ENCODE measurements at regions of chr3 and their contacts with region 1.

Region 1: GRCh38 chr3:72818092-72818773 is 30.0 kb downstream of the SHQ1 start:
- DNase-seq: no peak
- H3K4me3 ChIP-seq: no peak overlapping the region
- H3K27ac ChIP-seq: no peak overlapping the region
- H3K4me1 ChIP-seq: peaks cover 23 to 37% (median 26%) of the 10 kb centered on the region in 4 donors
- H3K27me3 ChIP-seq: no peaks in the 10 kb centered on the region
- CTCF ChIP-seq: peak; percentile 44 to 56 (median 50)
- EP300 ChIP-seq: no peak
- POLR2A ChIP-seq: no peak

Region 2: DNA sequence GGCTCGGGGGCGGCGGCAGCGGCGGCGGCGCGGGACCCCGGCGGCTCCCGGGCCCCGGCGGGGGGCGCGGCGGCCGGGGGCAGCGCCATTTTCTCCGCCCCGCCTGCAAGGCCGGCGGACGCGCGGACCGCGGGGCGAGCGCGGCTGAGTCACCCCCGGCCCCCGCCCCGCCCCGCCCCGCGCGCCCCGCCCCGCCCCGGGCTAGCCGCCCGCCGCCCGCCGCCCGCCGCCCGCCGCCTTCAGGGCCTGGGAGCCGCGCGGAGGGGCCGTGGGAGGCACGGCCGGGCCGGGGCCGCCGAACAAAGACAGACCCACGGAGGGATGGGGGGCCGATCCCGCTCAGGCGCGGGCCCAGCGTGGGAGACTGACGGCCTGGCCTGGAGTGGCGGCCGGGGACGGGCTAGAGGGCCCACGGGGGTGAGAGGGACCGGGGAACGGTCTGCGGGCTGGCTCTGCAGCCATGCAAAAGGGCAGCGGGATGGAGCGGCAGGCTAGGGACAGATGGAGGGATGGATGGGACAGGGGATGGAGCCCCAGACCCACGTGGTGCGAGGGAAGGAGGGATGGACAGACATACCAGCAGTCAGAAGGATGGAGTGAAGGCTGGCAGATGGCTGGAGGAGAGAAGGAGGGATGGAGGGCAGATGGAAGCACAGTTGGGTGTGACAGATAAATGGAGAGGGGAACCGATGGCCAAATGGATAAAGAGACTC is 1092.8 kb before region 1 on chr3 and contains the start of gene EIF4E3:
- intact Hi-C with region 1: loop called (anchors 10 kb)
- DNase-seq: no peak
- H3K4me3 ChIP-seq: peak within 1 kb of the TSS; percentile 70 to 99 (median 86)
- H3K27ac ChIP-seq: peak within 1 kb of the TSS; percentile 80 to 84 (median 84)
- H3K4me1 ChIP-seq: peaks cover 19 to 41% (median 29%) of the 10 kb centered on the region in 4 donors
- H3K27me3 ChIP-seq: no peaks in the 10 kb centered on the region
- CTCF ChIP-seq: no peak
- EP300 ChIP-seq: no peak
- POLR2A ChIP-seq: no peak
- total RNA-seq, gene EIF4E3: 36.2 to 51.9 (median 39.4) TPM

Region 3: GRCh38 chr3:71955240-71956068 is 862.8 kb before region 1 on chr3:
- intact Hi-C with region 1: loop called (anchors 2 kb)
- DNase-seq: peak; percentile 93
- H3K4me3 ChIP-seq: no peak overlapping the region
- H3K27ac ChIP-seq: no peak overlapping the region
- H3K4me1 ChIP-seq: peaks cover 6 to 12% (median 10%) of the 10 kb centered on the region in 4 donors
- H3K27me3 ChIP-seq: no peaks in the 10 kb centered on the region
- CTCF ChIP-seq: peak; percentile 74 to 79 (median 74)
- EP300 ChIP-seq: no peak
- POLR2A ChIP-seq: no peak

Region 4: GRCh38 chr3:72836923-72837322 is 18.7 kb after region 1 on chr3:
- intact Hi-C with region 1: no loop called
- DNase-seq: no peak
- H3K4me3 ChIP-seq: no peak overlapping the region
- H3K27ac ChIP-seq: peak overlapping the region in 1 of 4 donors; percentile 52
- H3K4me1 ChIP-seq: peaks cover 5 to 19% (median 15%) of the 10 kb centered on the region in 4 donors
- H3K27me3 ChIP-seq: no peaks in the 10 kb centered on the region
- CTCF ChIP-seq: peak in 2 of 3 experiments; percentile 21 to 31
- EP300 ChIP-seq: no peak
- POLR2A ChIP-seq: no peak

Region 5: DNA sequence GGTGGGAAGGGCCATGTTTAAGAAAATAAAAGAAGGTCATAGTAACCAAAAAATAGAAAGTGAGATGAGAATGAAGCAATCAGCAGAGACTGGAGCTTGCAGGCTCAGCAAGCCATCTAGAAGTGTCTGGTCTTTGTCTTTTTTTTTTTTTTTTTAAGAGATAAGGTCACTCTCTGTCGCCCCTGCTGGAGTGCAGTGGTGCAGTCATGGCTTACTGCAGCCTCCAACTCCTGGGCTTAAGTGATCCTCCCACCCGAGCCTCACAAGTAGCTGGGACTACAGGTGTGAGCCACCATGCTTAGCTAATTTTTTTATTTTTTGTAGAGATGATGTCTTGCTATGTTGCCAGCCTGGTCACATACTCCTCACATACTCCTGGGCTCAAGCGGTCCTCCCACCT is 105.8 kb after region 1 on chr3:
- intact Hi-C with region 1: no loop called
- DNase-seq: no peak
- H3K4me3 ChIP-seq: no peak overlapping the region
- H3K27ac ChIP-seq: no peak overlapping the region
- H3K4me1 ChIP-seq: no peaks in the 10 kb centered on the region
- H3K27me3 ChIP-seq: no peaks in the 10 kb centered on the region
- CTCF ChIP-seq: no peak
- EP300 ChIP-seq: no peak
- POLR2A ChIP-seq: no peak

Measured in esophagus muscularis mucosa (tissue), 4 donors.